A673 (cell line): ENCODE measurements at regions of chr4 and their contacts with region 1.

Region 1: DNA sequence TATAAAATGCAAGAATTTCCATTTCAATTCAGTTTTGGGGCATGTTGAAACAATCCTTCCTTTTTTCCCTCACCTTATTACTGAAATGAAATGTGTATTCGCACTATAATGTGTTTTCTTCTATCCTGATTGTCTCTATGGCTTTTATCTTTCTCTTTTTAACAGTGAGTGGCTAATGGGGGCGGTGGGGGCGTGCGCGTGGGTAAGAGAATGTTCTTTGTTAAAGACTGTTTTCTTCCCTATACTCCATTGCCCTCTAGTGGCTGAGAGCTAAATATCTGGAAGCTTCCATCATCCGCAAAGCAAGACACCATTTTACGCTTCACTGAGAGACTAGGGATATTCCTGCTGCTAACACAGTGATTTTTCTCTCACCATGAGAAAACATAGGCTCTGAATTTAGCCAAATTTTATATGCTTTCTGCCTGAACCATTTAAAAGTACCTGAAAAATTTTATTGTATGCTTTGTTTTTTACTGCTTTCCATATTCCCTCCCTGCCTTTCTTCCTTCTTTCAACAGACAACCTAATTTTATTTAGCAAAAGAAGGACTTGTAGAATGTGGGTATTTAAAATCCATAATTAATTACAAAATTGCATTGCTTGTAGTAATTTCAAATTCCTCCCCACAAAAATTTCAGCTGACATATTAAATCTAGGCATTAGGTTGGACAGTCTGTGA is 194.0 kb downstream of the GASK1B start:
- DNase-seq: peak; percentile 89
- H3K4me3 ChIP-seq: peak overlapping the region; percentile 23
- H3K27ac ChIP-seq: no peak overlapping the region
- H3K4me1 ChIP-seq: peaks cover 22% of the 10 kb centered on the region
- H3K27me3 ChIP-seq: no peaks in the 10 kb centered on the region
- CTCF ChIP-seq: peak; percentile 85

Region 2: DNA sequence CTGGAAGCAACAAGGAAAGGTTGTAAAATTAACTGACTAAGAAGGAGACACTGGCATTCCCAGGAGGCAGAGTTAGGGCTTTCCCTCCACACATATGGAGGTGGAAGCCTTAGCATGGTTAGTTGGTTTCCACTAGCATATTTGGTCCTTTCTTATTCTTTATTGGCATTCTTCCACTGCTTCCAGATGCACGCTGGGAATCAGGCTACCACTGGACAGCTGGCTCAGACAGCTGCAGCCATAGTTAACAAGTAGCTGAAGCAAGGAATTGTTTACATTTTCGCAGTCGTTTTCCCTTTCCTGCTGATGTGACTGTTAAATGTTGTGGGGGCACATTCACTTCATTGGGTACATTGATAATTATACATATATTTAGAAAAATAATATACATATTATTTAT is 589.1 kb before region 1 on chr4:
- CTCF ChIA-PET with region 1: no interaction called
- POLR2A ChIA-PET with region 1: no interaction called
- intact Hi-C with region 1: loop called (anchors 10 kb)
- DNase-seq: no peak
- H3K4me3 ChIP-seq: no peak overlapping the region
- H3K27ac ChIP-seq: no peak overlapping the region
- H3K4me1 ChIP-seq: no peaks in the 10 kb centered on the region
- H3K27me3 ChIP-seq: no peaks in the 10 kb centered on the region
- CTCF ChIP-seq: no peak

Region 3: DNA sequence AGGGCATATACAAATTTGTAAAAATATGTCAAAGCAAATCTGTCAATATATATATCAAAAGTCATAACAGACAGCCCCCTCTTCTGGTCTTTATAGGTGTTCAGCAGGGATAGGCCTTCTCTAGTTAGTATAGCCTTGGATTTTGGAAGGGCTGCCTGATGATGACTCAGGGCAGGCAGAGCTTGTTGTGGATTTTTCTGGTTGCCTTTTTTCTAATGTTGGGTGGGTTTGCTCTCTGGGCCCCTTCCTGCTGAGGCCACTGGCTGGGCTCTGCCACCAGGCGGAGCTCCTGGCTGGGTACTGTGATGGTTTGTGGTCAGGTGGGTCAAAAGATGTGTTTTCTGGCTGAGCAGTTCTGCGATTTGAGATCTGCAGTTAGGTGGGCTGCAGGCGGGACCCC is 464.1 kb before region 1 on chr4:
- CTCF ChIA-PET with region 1: interaction called, 3 read pairs
- POLR2A ChIA-PET with region 1: no interaction called
- intact Hi-C with region 1: loop called (anchors 5 kb)
- DNase-seq: peak; percentile 19
- H3K4me3 ChIP-seq: no peak overlapping the region
- H3K27ac ChIP-seq: no peak overlapping the region
- H3K4me1 ChIP-seq: no peaks in the 10 kb centered on the region
- H3K27me3 ChIP-seq: no peaks in the 10 kb centered on the region
- CTCF ChIP-seq: peak; percentile 52

Region 4: GRCh38 chr4:158208963-158209640 is 230.3 kb after region 1 on chr4:
- CTCF ChIA-PET with region 1: no interaction called
- POLR2A ChIA-PET with region 1: no interaction called
- intact Hi-C with region 1: no loop called
- DNase-seq: peak; percentile 21
- H3K4me3 ChIP-seq: no peak overlapping the region
- H3K27ac ChIP-seq: no peak overlapping the region
- H3K4me1 ChIP-seq: peaks cover 16% of the 10 kb centered on the region
- H3K27me3 ChIP-seq: no peaks in the 10 kb centered on the region
- CTCF ChIP-seq: no peak

Region 5: GRCh38 chr4:158461336-158461735 is 482.5 kb after region 1 on chr4:
- CTCF ChIA-PET with region 1: no interaction called
- POLR2A ChIA-PET with region 1: no interaction called
- intact Hi-C with region 1: no loop called
- DNase-seq: no peak
- H3K4me3 ChIP-seq: no peak overlapping the region
- H3K27ac ChIP-seq: no peak overlapping the region
- H3K4me1 ChIP-seq: no peaks in the 10 kb centered on the region
- H3K27me3 ChIP-seq: no peaks in the 10 kb centered on the region
- CTCF ChIP-seq: no peak